Activated naive CD4-positive, alpha-beta T cell treated with anti-CD3 and anti-CD28 coated beads for 36 hours (primary cell): ENCODE measurements at regions of chr19 and their contacts with region 1.

Region 1: GRCh38 chr19:796692-797527 is at the start of gene PTBP1:
- DNase-seq: peak; percentile 100
- H3K4me3 Mint-ChIP-seq: peak within 1 kb of the TSS; percentile 88
- H3K27ac Mint-ChIP-seq: peak within 1 kb of the TSS; percentile 88
- H3K4me1 Mint-ChIP-seq: peaks cover 28% of the 10 kb centered on the region
- H3K27me3 Mint-ChIP-seq: no peaks in the 10 kb centered on the region
- total RNA-seq, gene PTBP1: 510 to 532 TPM

Region 2: GRCh38 chr19:633068-633785 is 163.7 kb before region 1 on chr19 and contains the start of gene POLRMT:
- CTCF ChIA-PET with region 1: no interaction called
- intact Hi-C with region 1: loop called (anchors 1 kb)
- DNase-seq: peak; percentile 98
- H3K4me3 Mint-ChIP-seq: peak within 1 kb of the TSS; percentile 93
- H3K27ac Mint-ChIP-seq: peak within 1 kb of the TSS; percentile 78
- H3K4me1 Mint-ChIP-seq: peaks cover 37% of the 10 kb centered on the region
- H3K27me3 Mint-ChIP-seq: no peaks in the 10 kb centered on the region
- total RNA-seq, gene POLRMT: 63.8 to 65.6 TPM

Region 3: DNA sequence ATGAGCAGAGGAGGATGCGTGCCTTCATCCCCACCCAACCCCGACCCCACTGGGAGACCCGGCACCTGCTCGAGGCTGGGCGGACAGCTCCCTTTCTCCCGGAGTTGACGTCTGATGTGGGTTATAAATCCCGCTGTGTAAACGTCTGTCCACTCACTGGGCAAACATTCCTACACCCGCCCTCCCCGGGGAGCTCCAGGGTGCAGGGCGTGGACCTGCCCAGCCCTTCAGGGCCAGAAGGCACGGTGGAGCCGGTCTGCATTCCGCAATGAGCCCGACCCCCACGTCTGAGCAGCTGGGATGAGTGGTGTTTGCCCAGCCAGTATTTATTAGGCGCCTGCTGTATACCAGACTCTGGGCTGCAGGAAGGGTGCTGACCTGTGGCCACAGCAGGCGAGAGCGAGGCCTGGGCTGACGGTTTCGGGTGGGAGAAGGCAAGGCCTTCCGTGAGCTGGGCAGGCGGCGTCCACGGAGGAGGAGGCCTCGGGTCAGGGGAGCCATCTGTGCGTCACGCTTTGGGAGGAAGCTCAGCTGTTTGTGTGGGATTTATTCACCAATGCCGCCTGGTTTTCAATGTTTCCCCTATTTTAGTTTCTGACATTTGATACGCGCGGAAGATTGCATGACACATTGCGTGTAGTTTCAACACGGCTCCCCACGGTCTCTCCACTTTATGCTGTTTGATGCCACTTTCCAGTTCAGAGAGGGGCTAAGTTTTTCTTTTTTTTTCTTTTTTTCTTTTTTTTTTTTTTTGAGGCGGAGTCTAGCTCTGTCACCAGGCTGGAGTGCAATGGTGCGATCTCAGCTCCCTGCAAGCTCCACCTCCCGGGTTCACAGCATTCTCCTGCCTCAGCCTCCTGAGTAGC is 44.0 kb before region 1 on chr19:
- CTCF ChIA-PET with region 1: no interaction called
- intact Hi-C with region 1: no loop called
- DNase-seq: no peak
- H3K4me3 Mint-ChIP-seq: no peak overlapping the region
- H3K27ac Mint-ChIP-seq: no peak overlapping the region
- H3K4me1 Mint-ChIP-seq: no peaks in the 10 kb centered on the region
- H3K27me3 Mint-ChIP-seq: no peaks in the 10 kb centered on the region

Region 4: GRCh38 chr19:771332-771785 is 25.6 kb before region 1 on chr19:
- CTCF ChIA-PET with region 1: interaction called, 3 read pairs
- intact Hi-C with region 1: loop called (anchors 2 kb)
- DNase-seq: peak; percentile 65
- H3K4me3 Mint-ChIP-seq: no peak overlapping the region
- H3K27ac Mint-ChIP-seq: no peak overlapping the region
- H3K4me1 Mint-ChIP-seq: peaks cover 3% of the 10 kb centered on the region
- H3K27me3 Mint-ChIP-seq: no peaks in the 10 kb centered on the region

Region 5: DNA sequence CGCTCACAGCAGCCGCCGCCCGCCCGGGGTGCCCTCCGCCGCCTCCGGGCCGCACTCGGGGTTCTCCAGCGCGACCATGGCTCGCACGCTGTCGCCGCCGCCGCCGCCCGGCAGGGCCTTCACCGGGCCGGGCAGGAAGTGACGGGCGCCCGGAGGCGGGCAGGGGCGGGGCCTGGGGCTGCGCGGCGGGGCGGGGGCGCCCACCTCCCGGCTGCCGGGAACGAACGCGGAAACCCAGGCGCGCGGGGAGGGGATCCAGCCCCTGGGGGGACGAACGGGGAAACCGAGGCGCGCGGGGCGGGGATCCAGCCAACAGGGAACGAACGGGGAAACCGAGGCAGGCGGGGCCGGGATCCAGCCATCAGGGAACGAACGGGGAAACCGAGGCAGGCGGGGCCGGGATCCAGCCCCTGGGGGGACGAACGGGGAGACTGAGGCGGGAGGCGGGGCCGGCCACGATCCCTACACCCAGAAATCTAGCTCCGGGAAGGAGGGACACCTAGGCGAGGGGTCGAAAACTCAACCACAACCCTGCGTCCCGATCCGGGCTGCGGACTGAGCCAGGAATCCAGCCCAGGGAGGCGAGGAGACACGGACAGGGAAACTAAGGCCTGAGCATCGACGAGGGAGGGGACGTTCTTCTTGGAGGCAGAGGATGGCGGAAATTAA is 116.3 kb after region 1 on chr19 and contains the start of gene R3HDM4:
- CTCF ChIA-PET with region 1: no interaction called
- intact Hi-C with region 1: loop called (anchors 2 kb)
- DNase-seq: peak; percentile 88
- H3K4me3 Mint-ChIP-seq: peak within 1 kb of the TSS; percentile 84
- H3K27ac Mint-ChIP-seq: peak within 1 kb of the TSS; percentile 95
- H3K4me1 Mint-ChIP-seq: peaks cover 34% of the 10 kb centered on the region
- H3K27me3 Mint-ChIP-seq: peaks cover 2% of the 10 kb centered on the region
- total RNA-seq, gene R3HDM4: 111 to 120 TPM

Region 6: DNA sequence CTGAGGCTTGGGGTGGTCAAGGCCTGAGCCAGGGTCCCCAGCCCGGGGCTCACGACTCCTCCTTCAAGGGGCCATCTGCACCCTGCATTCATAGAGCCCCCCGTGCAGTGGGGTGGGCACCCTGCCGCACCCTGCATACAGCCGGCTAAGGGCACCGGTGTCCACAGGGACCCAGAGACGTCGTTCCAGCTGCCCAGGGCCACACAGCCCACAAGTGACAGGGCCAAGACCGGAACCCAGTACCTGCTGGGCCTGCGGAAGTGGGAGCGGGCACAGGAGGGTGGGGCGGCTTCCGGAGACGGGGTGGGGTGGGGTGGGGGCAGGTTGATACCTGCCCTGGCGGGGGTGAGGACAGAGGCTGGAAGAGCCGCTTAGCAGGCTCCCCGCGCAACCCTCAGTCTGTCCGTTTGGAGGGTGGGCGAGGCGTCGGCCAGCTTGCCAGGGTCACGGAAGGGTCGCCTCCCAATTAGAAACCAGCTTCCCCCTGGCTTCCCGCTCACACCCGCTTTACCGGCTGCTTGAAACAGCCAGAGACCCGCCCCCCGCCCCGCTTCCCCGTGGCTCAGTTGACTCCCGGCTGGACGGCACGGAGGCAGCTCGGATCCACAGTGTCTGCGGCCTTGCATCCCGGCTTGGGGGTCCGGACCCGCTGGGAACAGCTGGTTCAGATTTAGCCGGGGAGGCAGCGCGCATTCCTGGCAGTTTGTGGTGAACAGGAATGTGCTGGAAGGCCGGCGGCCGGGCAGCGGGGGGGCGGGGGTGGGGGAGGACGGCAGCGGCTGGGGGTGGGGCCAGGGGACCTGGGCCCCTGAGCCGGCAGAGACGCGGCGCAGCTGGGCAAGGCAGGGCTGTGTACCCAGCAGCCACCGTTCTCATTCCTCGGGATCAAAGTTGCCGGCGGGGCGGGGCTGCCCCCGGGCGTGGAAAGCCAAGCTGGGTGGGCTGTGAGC is 231.3 kb after region 1 on chr19:
- CTCF ChIA-PET with region 1: no interaction called
- intact Hi-C with region 1: no loop called
- DNase-seq: peak; percentile 69
- H3K4me3 Mint-ChIP-seq: peak overlapping the region; percentile 89
- H3K27ac Mint-ChIP-seq: peak overlapping the region; percentile 76
- H3K4me1 Mint-ChIP-seq: peaks cover 23% of the 10 kb centered on the region
- H3K27me3 Mint-ChIP-seq: no peaks in the 10 kb centered on the region

Region 7: DNA sequence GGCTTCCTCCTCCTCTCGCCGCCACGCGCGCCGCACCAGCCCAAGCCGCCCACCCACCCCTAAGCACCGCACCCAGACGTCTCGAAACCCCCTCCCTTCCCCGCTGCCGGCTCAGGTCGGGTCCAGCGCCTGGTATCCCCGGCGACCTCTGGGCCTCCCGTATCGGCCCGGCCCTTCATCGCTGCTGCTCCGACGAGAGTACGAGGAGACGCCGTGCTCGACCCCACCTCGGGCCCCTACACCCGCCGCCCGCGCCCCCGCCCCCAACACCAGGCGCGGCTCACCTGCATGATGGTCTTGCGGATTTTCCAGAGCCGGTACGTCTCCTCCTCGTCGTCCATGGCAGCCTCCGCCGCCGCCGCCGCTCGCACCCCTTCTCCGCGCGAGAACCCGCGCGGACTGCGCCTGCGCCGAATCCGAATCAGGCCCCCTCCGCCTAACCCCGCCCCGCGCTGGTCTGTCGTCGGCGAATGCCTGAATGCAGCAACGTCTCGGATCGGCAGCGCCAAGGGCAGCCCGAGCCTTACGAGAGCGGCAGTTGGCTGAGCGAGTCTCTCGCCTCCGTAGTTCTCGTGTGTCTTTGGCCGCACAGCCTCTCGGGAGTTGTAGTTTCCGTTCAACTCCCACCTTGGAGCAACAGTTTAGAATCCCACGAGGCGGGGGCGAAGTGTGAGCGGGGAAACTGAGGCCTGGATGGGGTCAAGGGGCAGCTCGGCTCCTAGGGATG is 298.2 kb after region 1 on chr19 and contains the start of gene POLR2E:
- CTCF ChIA-PET with region 1: no interaction called
- intact Hi-C with region 1: loop called (anchors 5 kb)
- DNase-seq: peak; percentile 99
- H3K4me3 Mint-ChIP-seq: peak within 1 kb of the TSS; percentile 92
- H3K27ac Mint-ChIP-seq: peak within 1 kb of the TSS; percentile 92
- H3K4me1 Mint-ChIP-seq: peaks cover 65% of the 10 kb centered on the region
- H3K27me3 Mint-ChIP-seq: no peaks in the 10 kb centered on the region
- total RNA-seq, gene POLR2E: 238 to 258 TPM

Region 8: DNA sequence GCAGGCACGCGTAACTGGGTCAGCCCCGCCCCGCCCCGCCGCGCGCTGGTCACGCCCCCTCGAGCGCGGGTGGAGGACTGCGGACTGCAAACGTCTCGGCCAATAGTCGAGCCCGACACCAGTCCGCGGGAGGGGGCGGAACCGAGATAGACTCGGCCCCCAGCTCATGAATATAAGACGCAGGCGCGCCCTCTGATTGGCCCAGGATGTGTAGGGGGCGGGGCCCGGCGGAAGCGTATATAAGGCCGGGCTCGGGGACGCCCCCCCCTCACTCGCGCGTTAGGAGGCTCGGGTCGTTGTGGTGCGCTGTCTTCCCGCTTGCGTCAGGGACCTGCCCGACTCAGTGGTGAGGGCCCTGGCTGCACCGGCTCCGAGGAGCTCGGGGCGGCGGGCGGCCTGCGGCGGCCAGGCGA is 472.2 kb after region 1 on chr19 and contains the start of gene CIRBP:
- CTCF ChIA-PET with region 1: no interaction called
- intact Hi-C with region 1: loop called (anchors 1 kb)
- DNase-seq: peak; percentile 99
- H3K4me3 Mint-ChIP-seq: peak within 1 kb of the TSS; percentile 87
- H3K27ac Mint-ChIP-seq: peak within 1 kb of the TSS; percentile 83
- H3K4me1 Mint-ChIP-seq: peaks cover 64% of the 10 kb centered on the region
- H3K27me3 Mint-ChIP-seq: no peaks in the 10 kb centered on the region
- total RNA-seq, gene CIRBP: 167 to 183 TPM